ENCODE measurements at regions of chr10 and their contacts with region 1.

Region 1: DNA sequence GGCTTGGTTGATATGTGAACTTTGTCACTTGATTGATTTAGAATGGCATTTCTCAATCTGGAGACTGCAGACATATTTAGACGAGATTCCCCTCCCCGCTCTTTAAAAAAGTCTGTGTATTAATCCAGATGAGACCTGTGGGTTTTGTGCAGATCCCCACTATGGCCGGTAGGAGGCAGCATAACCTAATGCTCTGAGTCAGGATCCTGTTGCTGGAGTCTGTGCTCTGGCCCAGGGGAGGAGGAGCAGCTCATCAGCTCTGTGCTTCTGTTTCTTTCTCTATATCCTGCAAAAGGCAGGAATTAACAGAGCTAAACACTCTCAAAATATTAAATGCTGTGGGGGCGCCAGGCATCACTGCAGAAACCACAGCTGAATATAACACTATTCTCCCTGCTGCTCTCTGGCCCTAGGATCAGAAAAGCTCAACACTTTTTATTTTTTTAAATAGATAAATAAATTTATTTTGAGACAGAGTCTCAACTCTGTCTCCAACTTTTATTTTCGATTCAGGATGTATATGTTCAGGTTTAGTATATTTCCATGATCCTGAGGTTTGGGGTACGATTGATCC is 23.9 kb upstream of the SEPHS1 start:
- DNase-seq: peak; percentile 59
- ATAC-seq: peak; percentile 94 to 95

Region 2: GRCh38 chr10:13440185-13441061 is 68.4 kb after region 1 on chr10:
- intact Hi-C with region 1: loop called (anchors 2 to 10 kb)
- DNase-seq: peak; percentile 59
- ATAC-seq: peak; percentile 78 to 89

Region 3: GRCh38 chr10:13536674-13537366 is 164.8 kb after region 1 on chr10:
- intact Hi-C with region 1: loop called in 1 of 2 experiments (anchors 2 kb)
- DNase-seq: peak; percentile 47
- ATAC-seq: peak; percentile 80 to 81

Region 4: GRCh38 chr10:13586676-13587355 is 214.8 kb after region 1 on chr10 and contains the start of gene PRPF18:
- intact Hi-C with region 1: loop called in 1 of 2 experiments (anchors 5 kb)
- DNase-seq: peak; percentile 94
- ATAC-seq: peak; percentile 100
- total RNA-seq, gene PRPF18: 14.3 to 15.2 TPM

Measured in left cardiac atrium (tissue), 4 donors.